Breast epithelium (tissue), 4 donors: ENCODE measurements at regions of chr3 and their contacts with region 1.

Region 1: GRCh38 chr3:7144696-7145308 is 283.9 kb downstream of the GRM7 start:
- DNase-seq: no peak
- H3K4me3 ChIP-seq: no peak overlapping the region
- H3K27ac ChIP-seq: no peak overlapping the region
- H3K4me1 ChIP-seq: no peaks in the 10 kb centered on the region
- H3K27me3 ChIP-seq: no peaks in the 10 kb centered on the region
- CTCF ChIP-seq: peak in 1 of 3 donors; percentile 22
- POLR2A ChIP-seq: no peak

Region 2: GRCh38 chr3:5212628-5213573 is 1931.9 kb before region 1 on chr3:
- intact Hi-C with region 1: loop called (anchors 5 kb)
- DNase-seq: no peak
- H3K4me3 ChIP-seq: no peak overlapping the region
- H3K27ac ChIP-seq: no peak overlapping the region
- H3K4me1 ChIP-seq: no peaks in the 10 kb centered on the region
- H3K27me3 ChIP-seq: no peaks in the 10 kb centered on the region
- CTCF ChIP-seq: no peak
- POLR2A ChIP-seq: no peak

Region 3: GRCh38 chr3:6351752-6352151 is 793.0 kb before region 1 on chr3:
- intact Hi-C with region 1: loop called (anchors 5 kb)
- DNase-seq: no peak
- H3K4me3 ChIP-seq: no peak overlapping the region
- H3K27ac ChIP-seq: no peak overlapping the region
- H3K4me1 ChIP-seq: no peaks in the 10 kb centered on the region
- H3K27me3 ChIP-seq: no peaks in the 10 kb centered on the region
- CTCF ChIP-seq: no peak
- POLR2A ChIP-seq: no peak

Region 4: GRCh38 chr3:7787871-7788828 is 643.3 kb after region 1 on chr3:
- intact Hi-C with region 1: no loop called
- DNase-seq: no peak
- H3K4me3 ChIP-seq: no peak overlapping the region
- H3K27ac ChIP-seq: no peak overlapping the region
- H3K4me1 ChIP-seq: no peaks in the 10 kb centered on the region
- H3K27me3 ChIP-seq: no peaks in the 10 kb centered on the region
- CTCF ChIP-seq: no peak
- POLR2A ChIP-seq: no peak